ENCODE measurements at regions of chr15 and their contacts with region 1.

Region 1: DNA sequence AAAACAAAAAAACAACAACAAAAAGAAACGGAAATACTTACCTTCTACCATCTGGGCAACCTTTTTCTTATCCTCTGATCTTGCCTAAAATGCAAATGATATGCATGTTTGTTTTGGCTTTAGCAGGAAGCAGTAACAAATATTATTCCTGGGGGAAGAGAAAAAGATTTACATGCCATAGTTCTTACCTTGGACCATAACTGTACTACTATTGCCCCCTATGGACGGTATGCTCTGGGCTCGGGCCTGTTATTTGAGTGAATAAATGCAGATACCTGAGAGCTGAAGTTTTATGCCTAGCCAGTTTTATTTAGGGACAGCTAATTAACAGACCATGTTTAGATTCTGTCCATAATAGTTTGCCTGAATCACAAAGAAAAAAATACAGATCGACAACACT is 12.6 kb upstream of the STARD5 start:
- DNase-seq: peak; percentile 75
- H3K4me3 Mint-ChIP-seq: no peak overlapping the region
- H3K27ac Mint-ChIP-seq: no peak overlapping the region
- H3K4me1 Mint-ChIP-seq: peaks cover 3% of the 10 kb centered on the region
- H3K27me3 Mint-ChIP-seq: peaks cover 8% of the 10 kb centered on the region

Region 2: GRCh38 chr15:81155375-81156218 is 181.0 kb before region 1 on chr15:
- intact Hi-C with region 1: loop called (anchors 10 kb)
- DNase-seq: peak; percentile 77
- H3K4me3 Mint-ChIP-seq: no peak overlapping the region
- H3K27ac Mint-ChIP-seq: no peak overlapping the region
- H3K4me1 Mint-ChIP-seq: peaks cover 12% of the 10 kb centered on the region
- H3K27me3 Mint-ChIP-seq: peaks cover 9% of the 10 kb centered on the region

Region 3: DNA sequence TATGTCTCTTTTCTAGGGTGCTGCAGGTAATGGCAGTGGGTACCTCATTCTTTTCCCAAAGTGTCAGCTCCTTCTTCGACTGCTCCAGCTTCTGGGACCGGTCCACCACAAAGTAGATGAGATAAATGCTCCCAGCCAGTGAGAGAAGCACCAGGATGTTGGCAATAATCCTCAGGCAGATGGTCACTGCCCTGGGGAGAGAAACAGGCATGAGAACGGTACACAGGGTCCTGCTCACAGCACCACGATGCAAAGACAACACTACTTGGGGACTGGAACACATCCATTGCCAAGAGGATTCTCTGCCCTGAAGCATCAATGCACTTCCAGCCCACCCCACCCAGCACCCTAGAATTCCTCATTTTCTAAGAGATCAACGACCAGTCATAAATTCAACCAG is 15.1 kb after region 1 on chr15:
- intact Hi-C with region 1: no loop called
- DNase-seq: no peak
- H3K4me3 Mint-ChIP-seq: no peak overlapping the region
- H3K27ac Mint-ChIP-seq: no peak overlapping the region
- H3K4me1 Mint-ChIP-seq: no peaks in the 10 kb centered on the region
- H3K27me3 Mint-ChIP-seq: peaks cover 3% of the 10 kb centered on the region

Region 4: GRCh38 chr15:81473177-81473576 is 136.6 kb after region 1 on chr15:
- intact Hi-C with region 1: no loop called
- DNase-seq: no peak
- H3K4me3 Mint-ChIP-seq: no peak overlapping the region
- H3K27ac Mint-ChIP-seq: no peak overlapping the region
- H3K4me1 Mint-ChIP-seq: no peaks in the 10 kb centered on the region
- H3K27me3 Mint-ChIP-seq: peaks cover 22% of the 10 kb centered on the region